ENCODE measurements at regions of chr4 and their contacts with region 1.

Region 1: DNA sequence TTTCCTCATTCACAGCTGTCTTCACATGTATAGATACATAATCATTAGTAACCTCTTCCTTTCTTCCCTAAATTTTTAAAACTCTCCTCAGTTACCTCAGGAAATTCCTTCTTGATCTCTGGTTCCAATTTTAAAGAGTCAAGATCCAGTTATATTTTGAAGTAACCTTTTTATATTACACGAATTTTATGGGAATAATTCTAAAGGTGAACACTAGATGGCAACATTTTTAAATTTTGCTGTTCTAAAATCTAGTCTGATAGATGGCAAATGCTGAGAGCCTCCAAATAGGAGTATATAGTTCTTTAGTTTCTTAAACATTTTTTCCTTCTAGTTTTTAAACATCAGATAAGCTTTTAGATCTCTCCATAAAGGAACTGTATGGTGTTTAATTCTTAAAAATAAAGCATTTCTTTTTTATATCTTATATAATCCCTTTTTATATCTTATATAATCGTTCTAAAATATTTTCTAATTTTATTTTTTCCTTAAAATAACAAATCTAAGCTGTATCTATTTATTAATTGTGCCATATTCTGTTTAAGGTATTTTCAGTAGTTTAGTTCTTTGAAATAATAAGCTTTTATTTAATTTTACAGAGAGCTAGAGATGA is 37.9 kb upstream of the PAPSS1 start:
- DNase-seq: no peak
- H3K4me3 ChIP-seq: no peak overlapping the region
- H3K27ac ChIP-seq: no peak overlapping the region
- H3K4me1 ChIP-seq: no peaks in the 10 kb centered on the region
- H3K27me3 ChIP-seq: no peaks in the 10 kb centered on the region
- CTCF ChIP-seq: peak in 5 of 6 experiments; percentile 46 to 77 (median 62)
- POLR2A ChIP-seq: no peak

Region 2: GRCh38 chr4:107915220-107915619 is 157.2 kb after region 1 on chr4:
- intact Hi-C with region 1: loop called (anchors 2 kb)
- DNase-seq: no peak
- H3K4me3 ChIP-seq: no peak overlapping the region
- H3K27ac ChIP-seq: no peak overlapping the region
- H3K4me1 ChIP-seq: no peaks in the 10 kb centered on the region
- H3K27me3 ChIP-seq: no peaks in the 10 kb centered on the region
- CTCF ChIP-seq: no peak
- POLR2A ChIP-seq: no peak